ENCODE measurements at regions of chr17 and their contacts with region 1.

Region 1: GRCh38 chr17:28726226-28727130 is at the start of gene TLCD1:
- DNase-seq: peak; percentile 94
- ATAC-seq: peak; percentile 60
- H3K4me3 Mint-ChIP-seq: peak within 1 kb of the TSS; percentile 99
- H3K27ac Mint-ChIP-seq: peak within 1 kb of the TSS; percentile 99
- H3K4me1 Mint-ChIP-seq: peaks cover 42% of the 10 kb centered on the region
- H3K27me3 Mint-ChIP-seq: no peaks in the 10 kb centered on the region
- total RNA-seq, gene TLCD1: 1.6 to 2.2 TPM

Region 2: DNA sequence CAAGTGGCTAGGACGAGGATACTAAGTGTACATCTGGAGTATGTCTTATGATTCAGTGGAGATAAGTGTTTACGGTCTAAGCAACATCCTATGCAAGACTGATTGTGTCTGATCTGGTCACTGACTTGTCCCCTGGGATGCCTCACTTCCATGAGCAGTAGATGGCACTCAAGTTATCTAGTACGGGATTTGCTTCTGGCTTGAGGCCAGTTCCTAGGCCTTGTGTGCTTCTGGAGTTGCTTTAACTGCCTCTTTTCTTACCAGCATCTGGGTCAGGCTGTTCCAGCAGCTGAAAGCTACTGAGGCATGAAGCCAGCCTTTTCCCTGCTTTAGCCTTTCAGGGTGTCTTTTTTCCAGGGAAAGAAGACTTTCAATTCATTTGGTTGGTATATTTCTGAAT is 41.5 kb before region 1 on chr17:
- POLR2A ChIA-PET with region 1: no interaction called
- DNase-seq: no peak
- ATAC-seq: no peak
- H3K4me3 Mint-ChIP-seq: no peak overlapping the region
- H3K27ac Mint-ChIP-seq: no peak overlapping the region
- H3K4me1 Mint-ChIP-seq: no peaks in the 10 kb centered on the region
- H3K27me3 Mint-ChIP-seq: no peaks in the 10 kb centered on the region

Region 3: DNA sequence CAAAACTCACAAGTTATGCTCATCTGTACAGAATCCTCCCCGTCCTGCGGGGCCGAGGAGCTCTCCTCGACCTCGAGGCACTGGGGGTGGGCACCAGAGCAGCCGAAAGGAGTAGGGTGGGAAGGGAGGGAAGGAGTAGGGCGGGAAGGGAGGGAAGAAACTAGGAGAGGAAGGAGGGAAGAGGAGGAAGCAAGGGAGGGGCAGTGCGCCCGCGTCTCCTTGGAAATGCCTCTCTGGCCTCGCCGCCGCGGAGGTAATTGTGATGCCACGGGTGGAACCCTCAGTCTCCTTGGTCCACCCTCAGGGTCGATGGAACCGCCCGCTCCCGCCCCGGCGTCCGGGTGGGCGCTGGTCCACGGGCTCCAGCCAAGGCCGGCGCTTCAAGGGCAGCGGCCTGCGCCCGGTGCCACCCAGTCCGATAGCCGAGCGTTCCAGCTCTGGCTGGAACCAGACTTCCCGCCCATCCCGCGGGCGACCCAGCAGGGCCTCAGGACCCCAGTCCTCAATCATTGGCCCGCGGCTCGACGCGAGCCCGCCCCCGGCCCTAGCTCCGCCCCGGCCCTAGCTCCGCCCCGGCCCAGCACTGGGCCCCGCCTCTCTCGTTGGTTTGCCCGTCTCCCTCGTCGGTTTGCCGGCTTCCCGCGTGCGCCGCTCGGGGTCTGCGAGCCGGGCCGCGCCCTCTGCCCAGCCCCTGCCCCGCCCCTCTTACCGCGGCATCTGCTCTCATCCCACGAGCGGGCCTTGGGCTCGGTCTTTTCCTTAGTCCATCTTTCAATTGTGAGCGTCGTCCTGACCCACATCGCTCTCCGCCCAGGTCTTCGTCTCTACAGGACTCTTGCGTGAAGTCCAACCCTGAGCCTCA is 15.4 kb before region 1 on chr17:
- POLR2A ChIA-PET with region 1: interaction called, 50 read pairs
- DNase-seq: peak; percentile 96
- ATAC-seq: peak; percentile 84
- H3K4me3 Mint-ChIP-seq: peak overlapping the region; percentile 95
- H3K27ac Mint-ChIP-seq: peak overlapping the region; percentile 99
- H3K4me1 Mint-ChIP-seq: peaks cover 21% of the 10 kb centered on the region
- H3K27me3 Mint-ChIP-seq: peaks cover 17% of the 10 kb centered on the region

Region 4: DNA sequence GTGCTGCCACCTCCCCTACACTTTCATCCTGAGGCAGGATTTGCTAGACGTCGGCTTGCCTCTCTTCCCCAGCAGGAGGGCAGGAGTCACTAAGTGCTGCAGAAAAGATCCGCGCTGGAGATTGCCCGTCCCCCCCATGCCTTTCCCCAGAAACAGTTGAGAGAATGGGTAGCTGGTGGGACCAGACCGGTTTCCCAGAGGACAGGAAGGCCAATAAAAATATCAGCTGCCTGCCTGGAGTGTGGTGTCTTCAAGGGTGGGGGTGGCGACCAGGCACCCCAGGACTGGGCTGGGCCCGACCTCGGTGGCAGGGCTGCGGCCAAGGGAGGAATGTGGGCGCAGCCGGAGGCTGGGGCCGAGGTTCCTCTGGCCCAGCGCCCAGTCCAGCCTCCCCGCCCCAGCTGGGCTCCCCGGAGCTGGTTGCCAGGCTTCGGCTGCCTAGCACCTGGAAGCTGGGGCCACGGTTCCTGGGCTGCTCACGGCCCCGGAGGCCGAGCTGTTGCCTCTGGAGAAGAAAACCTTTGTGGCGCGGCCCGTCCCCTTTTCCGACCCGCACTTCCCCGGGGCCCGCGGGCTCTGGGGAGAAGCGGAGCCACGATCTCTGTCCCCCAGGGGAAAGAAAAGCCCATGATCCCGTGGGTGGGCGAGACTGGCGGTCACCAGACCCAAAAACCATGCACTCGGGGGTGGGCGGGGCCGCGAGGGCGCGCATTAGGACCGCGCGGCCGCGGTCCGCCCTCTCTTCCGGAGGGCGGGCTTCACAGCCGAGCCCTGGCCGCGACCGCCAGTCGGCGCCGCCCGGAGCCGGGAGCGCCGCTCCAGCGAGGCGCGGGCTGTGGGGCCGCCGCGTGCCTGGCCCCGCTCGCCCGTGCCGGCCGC is 17.0 kb after region 1 on chr17 and contains the start of gene TRAF4:
- POLR2A ChIA-PET with region 1: interaction called, 266 read pairs
- DNase-seq: peak; percentile 88
- ATAC-seq: peak; percentile 86
- H3K4me3 Mint-ChIP-seq: peak within 1 kb of the TSS; percentile 91
- H3K27ac Mint-ChIP-seq: peak within 1 kb of the TSS; percentile 88
- H3K4me1 Mint-ChIP-seq: peaks cover 26% of the 10 kb centered on the region
- H3K27me3 Mint-ChIP-seq: no peaks in the 10 kb centered on the region
- total RNA-seq, gene TRAF4: 48.1 to 55.3 TPM

Region 5: DNA sequence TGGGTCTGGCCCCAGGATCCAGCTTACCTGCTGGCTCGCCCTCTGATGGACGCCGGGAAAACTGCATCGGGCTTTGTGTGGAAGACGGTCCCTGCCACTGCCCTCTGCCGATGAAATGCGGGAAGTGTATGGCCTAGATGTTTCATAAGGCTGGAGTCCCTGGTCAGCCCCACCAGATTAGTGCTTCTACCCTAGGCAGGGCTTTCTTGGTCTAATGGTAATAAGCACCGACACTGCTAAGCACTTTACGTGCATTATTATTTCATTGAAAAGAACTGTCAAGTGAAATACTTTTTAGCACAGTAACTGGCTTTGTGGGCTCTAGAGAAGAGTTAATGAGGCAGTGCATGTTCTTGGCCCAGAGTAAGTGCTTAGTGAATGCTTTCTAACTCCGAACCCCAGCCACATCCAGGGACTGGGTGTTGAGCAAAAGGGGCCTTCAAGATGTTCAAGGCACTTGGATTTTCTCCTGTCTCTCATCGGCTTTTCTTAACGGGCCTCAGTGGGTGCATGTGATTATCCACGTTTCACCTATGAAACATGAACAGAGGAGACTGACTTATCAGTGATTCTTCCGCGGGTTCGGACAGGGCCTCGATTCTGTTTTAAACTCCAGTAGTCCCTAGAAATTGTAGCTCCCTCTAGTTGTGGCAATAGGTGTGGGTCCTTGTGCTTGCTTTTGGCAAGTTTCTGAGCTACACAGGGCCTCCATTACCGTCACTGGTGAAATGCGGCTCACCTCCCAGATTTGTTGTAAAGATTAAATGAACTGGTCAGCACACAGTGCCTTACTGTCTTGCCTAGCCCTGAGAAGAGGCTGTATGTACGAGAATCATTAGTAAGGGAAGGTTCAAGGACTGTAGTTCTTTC is 23.9 kb after region 1 on chr17:
- POLR2A ChIA-PET with region 1: interaction called, 266 read pairs
- DNase-seq: peak; percentile 88
- ATAC-seq: peak; percentile 76
- H3K4me3 Mint-ChIP-seq: no peak overlapping the region
- H3K27ac Mint-ChIP-seq: no peak overlapping the region
- H3K4me1 Mint-ChIP-seq: peaks cover 19% of the 10 kb centered on the region
- H3K27me3 Mint-ChIP-seq: no peaks in the 10 kb centered on the region

Region 6: DNA sequence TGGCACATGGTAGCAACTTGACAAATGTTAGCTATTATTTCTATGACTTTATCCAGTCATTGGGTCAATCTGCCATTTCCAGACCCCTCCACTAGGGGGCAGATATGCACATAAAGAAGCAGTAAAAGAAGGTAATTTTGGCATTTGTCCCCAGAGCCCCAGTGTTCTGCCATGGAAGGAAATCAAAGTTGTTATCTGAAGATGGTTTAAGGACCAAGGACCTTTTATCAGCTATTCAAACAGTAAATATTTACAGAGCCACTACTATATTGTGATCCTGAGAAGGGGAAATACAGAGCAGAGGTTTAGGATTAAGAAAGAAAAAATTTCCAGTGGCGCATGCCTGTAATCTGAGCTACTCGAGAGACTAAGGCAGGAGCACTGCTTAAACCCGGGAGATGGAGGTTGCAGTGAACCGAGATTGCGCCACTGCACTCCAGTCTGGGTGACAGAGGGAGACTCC is 37.4 kb after region 1 on chr17:
- POLR2A ChIA-PET with region 1: interaction called, 13 read pairs
- DNase-seq: no peak
- ATAC-seq: peak; percentile 67
- H3K4me3 Mint-ChIP-seq: no peak overlapping the region
- H3K27ac Mint-ChIP-seq: peak overlapping the region; percentile 66
- H3K4me1 Mint-ChIP-seq: peaks cover 9% of the 10 kb centered on the region
- H3K27me3 Mint-ChIP-seq: no peaks in the 10 kb centered on the region

Region 7: DNA sequence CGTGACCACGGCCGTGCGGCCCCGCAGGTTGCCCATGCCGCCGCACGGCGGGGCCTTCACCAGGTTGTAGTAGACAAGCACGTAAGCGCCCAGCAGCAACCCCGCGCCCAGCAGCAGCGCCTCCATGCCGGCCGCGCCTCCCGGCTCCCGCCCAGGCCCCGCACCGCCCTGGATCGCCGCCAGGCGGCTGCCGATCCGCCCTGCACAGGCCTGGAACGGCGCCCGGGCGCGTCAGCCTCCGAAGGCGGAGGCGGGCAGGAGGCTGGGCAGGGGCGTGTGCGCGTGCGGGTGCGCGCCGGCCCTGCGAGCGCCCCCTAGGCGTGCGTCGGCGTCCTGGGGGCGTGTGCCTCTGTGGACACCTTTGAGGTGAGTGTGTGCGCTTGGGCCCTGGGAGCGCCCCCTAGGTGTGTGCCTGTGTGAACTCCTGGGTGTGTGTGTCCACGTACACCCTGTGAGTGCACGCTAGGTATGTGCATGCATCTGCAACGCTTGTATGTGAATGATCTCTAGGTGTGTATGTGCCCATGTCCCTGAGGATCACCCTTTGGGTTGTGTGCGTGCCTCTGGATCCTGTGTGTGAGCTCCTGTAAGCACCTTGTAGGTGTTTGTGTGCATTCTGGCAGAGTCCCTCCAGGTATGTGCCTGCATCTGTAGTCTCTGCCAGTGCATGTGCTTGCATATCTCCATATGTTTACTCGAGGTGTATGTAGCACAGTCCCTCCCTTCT is 176.5 kb after region 1 on chr17 and contains the start of gene DHRS13:
- POLR2A ChIA-PET with region 1: interaction called, 17 read pairs
- DNase-seq: peak; percentile 99
- ATAC-seq: peak; percentile 95
- H3K4me3 Mint-ChIP-seq: peak within 1 kb of the TSS; percentile 90
- H3K27ac Mint-ChIP-seq: peak within 1 kb of the TSS; percentile 88
- H3K4me1 Mint-ChIP-seq: peaks cover 38% of the 10 kb centered on the region
- H3K27me3 Mint-ChIP-seq: no peaks in the 10 kb centered on the region
- total RNA-seq, gene DHRS13: 31.6 to 32.0 TPM

Region 8: GRCh38 chr17:28951991-28952975 is 225.8 kb after region 1 on chr17:
- POLR2A ChIA-PET with region 1: interaction called, 53 read pairs
- DNase-seq: peak; percentile 88
- ATAC-seq: peak; percentile 67
- H3K4me3 Mint-ChIP-seq: no peak overlapping the region
- H3K27ac Mint-ChIP-seq: no peak overlapping the region
- H3K4me1 Mint-ChIP-seq: peaks cover 19% of the 10 kb centered on the region
- H3K27me3 Mint-ChIP-seq: no peaks in the 10 kb centered on the region

Measured in activated naive CD8-positive, alpha-beta T cell treated with anti-CD3 and anti-CD28 coated beads, Interleukin-2, amount 10 ng/mL, durations not matched to agents 7 days and 5 days (primary cell).